ENCODE measurements at regions of chr6 and their contacts with region 1.

Region 1: GRCh38 chr6:150016324-150017185 is 8.8 kb downstream of the RAET1L start:
- DNase-seq: peak; percentile 65
- ATAC-seq: peak; percentile 93
- H3K4me3 ChIP-seq: no peak overlapping the region
- H3K27ac ChIP-seq: no peak overlapping the region
- H3K4me1 ChIP-seq: 0 out of 4 replicates have a peak, but pooled peaks cover 0 to 7% of the 10 kb centered on the region in 2 experiments
- H3K27me3 ChIP-seq: no peaks in the 10 kb centered on the region
- CTCF ChIP-seq: peak; percentile 36 to 81 (median 67)
- POLR2A ChIP-seq: no peak
- RAD21 ChIP-seq: peak; percentile 87

Region 2: DNA sequence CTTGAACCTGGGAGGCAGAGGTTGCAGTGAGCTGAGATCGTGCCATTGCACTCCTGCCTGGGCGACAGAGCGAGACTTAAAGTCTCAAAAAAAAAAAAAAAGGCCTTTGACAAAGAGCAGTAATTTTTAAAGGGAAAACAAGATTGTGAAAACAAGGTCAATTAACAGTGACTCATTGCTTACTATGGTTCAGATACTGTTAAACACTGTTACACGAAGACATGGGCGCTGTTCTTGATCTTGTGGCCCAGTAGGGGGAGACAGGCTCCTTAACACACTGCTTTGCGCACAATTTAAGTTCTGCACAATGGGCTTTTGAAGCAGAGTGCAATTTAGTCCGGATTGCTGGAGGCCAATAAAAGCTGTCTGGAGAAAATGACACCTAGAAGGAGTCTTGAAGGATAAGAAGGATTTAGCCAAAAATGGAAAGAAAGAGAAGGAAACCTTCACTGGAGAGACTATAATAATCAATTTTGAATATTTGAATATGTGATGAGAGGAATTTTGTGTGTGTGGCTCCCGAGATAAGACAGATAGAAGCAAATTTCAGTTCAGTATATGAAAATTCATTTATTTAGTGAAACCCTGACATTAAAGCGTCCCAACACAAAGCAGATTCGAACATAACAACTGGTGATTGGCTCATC is 292.7 kb before region 1 on chr6:
- CTCF ChIA-PET with region 1: no interaction called
- POLR2A ChIA-PET with region 1: no interaction called
- RAD21 ChIA-PET with region 1: interaction called in 1 of 2 experiments, 3 read pairs
- intact Hi-C with region 1: loop called (anchors 5 kb)
- DNase-seq: peak; percentile 60
- ATAC-seq: peak; percentile 96
- H3K4me3 ChIP-seq: no peak overlapping the region
- H3K27ac ChIP-seq: no peak overlapping the region
- H3K4me1 ChIP-seq: peaks cover 0 to under 1% of the 10 kb centered on the region in 2 experiments; a peak in 1 of 4 replicates
- H3K27me3 ChIP-seq: no peaks in the 10 kb centered on the region
- CTCF ChIP-seq: peak; percentile 77 to 85 (median 81)
- POLR2A ChIP-seq: no peak
- RAD21 ChIP-seq: peak; percentile 78

Region 3: DNA sequence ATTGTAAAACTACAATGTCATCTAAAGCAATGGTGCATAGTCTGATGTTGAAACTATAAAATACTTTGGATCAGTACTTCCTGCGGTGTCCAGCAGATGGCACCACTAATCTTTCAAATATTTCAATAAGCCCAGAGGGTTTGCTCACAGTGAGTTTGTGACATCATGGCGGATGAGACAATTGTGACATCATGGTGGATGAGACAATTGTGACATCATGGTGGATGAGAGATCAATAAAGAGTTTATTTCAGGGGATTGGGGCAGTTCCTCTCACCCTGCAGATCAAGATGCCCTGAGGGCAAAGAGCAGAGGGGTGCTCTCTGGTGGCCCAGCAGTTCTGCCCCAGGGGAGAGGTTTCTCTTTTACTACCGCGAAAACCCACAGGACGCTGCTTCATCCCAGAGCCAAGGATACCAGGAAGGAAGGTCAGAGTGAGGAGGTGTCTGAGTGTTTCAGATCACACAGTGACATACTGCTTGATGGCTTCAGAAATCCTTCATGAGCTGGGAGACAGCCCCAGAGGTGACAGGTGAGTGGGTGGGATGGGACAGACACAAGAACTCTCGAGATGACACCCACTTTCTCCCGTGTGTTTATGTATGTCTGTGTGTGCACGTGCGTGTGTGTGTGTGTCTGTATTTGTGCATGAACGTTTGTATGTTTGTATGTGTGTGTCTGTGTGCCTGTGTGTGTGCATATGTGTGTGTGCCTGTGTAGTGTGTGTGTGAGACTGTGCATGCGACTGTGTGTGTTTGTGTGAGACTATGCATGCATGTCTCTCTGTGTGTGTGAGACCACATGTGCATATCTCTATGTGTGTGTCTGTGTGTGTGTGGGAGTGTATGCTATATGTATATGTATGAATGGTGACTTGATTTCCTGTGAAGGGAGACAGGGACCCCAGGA is 82.1 kb before region 1 on chr6:
- CTCF ChIA-PET with region 1: interaction called, 5 read pairs
- POLR2A ChIA-PET with region 1: no interaction called
- RAD21 ChIA-PET with region 1: interaction called in 1 of 2 experiments, 5 read pairs
- intact Hi-C with region 1: loop called (anchors 2 kb)
- DNase-seq: peak; percentile 76
- ATAC-seq: peak; percentile 67
- H3K4me3 ChIP-seq: no peak overlapping the region
- H3K27ac ChIP-seq: no peak overlapping the region
- H3K4me1 ChIP-seq: peaks cover 0 to 3% of the 10 kb centered on the region in 2 experiments; a peak in 1 of 4 replicates
- H3K27me3 ChIP-seq: no peaks in the 10 kb centered on the region
- CTCF ChIP-seq: peak; percentile 63 to 88 (median 87)
- POLR2A ChIP-seq: no peak
- RAD21 ChIP-seq: peak; percentile 96

Region 4: GRCh38 chr6:150004783-150005717 is 11.5 kb before region 1 on chr6:
- CTCF ChIA-PET with region 1: interaction called, 12 read pairs
- POLR2A ChIA-PET with region 1: interaction called, 4 read pairs
- RAD21 ChIA-PET with region 1: no interaction called
- intact Hi-C with region 1: no loop called
- DNase-seq: peak; percentile 81
- ATAC-seq: peak; percentile 93
- H3K4me3 ChIP-seq: peak overlapping the region; percentile 81 to 91
- H3K27ac ChIP-seq: peak overlapping the region; percentile 57
- H3K4me1 ChIP-seq: peaks cover 18 to 33% of the 10 kb centered on the region in 2 experiments
- H3K27me3 ChIP-seq: no peaks in the 10 kb centered on the region
- CTCF ChIP-seq: no peak
- POLR2A ChIP-seq: peak; percentile 36
- RAD21 ChIP-seq: no peak